ENCODE measurements at regions of chr12 and their contacts with region 1.

Region 1: GRCh38 chr12:9925708-9926393 is 6.3 kb downstream of the CLEC2A start:
- DNase-seq: peak in 14 of 42 donors; percentile 3 to 45 (median 15)

Region 2: GRCh38 chr12:9813821-9814809 is 111.7 kb before region 1 on chr12:
- intact Hi-C with region 1: loop called (anchors 10 kb)
- DNase-seq: peak; percentile 58 to 90 (median 76)

Region 3: GRCh38 chr12:9992296-9992695 is 66.4 kb after region 1 on chr12:
- intact Hi-C with region 1: no loop called
- DNase-seq: peak in 2 of 42 donors; percentile 8 to 22